ENCODE measurements at regions of chr2 and their contacts with region 1.

Region 1: DNA sequence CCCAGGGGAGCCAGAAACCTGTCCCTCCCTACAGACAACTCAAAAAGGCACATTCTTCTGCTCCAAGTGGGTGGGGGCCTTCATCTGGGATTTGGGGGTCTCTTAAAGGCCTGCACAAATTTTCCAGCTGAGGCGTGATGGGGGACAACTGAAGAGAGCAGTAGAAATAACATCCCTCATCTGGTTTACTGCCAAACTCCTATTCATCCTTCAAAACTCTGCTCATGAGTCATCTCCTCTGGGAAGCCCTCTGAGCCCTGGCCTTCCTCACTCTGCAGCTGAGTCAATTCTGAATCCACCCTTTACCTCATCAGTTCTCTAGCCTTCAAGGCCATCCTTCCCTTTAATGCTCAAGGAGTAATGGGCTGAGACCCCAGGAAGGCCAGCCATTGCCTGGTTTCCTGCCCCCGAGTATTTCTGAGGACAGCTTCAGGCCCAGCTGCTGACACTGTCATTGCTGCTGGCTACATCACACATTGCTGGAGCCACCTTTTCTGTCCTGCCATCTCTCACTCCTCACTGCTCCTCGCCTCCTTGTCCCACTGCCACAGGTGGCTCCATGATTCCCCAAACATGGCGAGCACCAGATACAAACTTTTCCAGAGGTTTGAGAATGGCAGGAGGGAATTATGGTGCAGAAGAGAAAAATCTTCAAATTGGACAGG is 32.2 kb upstream of the GLI2 start:
- DNase-seq: peak; percentile 69
- H3K4me3 ChIP-seq: no peak overlapping the region
- H3K27ac ChIP-seq: no peak overlapping the region
- H3K4me1 ChIP-seq: peaks cover 4% of the 10 kb centered on the region
- H3K27me3 ChIP-seq: no peaks in the 10 kb centered on the region
- CTCF ChIP-seq: no peak

Region 2: GRCh38 chr2:120456867-120457266 is 246.6 kb before region 1 on chr2:
- CTCF ChIA-PET with region 1: no interaction called
- dilution Hi-C with region 1: no loop called
- in situ Hi-C with region 1: no loop called
- intact Hi-C with region 1: no loop called
- DNase-seq: no peak
- H3K4me3 ChIP-seq: no peak overlapping the region
- H3K27ac ChIP-seq: no peak overlapping the region
- H3K4me1 ChIP-seq: no peaks in the 10 kb centered on the region
- H3K27me3 ChIP-seq: no peaks in the 10 kb centered on the region
- CTCF ChIP-seq: peak in 1 of 2 donors; percentile 1

Region 3: DNA sequence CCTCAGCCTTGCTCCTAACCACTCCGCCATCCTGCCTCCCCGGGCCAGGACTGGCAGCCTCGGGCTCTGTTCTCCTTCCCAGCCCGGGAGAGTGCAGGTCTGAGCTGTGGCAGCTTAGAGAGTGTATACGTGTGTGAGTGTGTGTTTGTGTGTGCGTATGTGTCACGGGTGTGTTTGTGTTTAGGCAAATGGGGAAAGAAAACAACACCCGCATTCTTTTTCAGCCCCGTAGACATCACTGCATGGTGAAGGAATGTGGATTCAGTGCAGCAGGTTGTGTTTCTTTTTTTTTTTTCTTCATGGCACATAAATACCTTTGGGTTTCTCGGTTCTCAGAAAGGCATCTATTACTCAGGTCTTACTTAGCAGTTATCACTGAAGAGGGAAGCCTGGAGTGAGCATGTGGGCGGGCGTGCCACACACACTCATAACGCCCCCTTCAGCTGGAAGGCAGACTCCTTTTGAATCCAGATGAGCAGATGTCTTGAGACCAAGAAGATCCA is 76.4 kb after region 1 on chr2:
- CTCF ChIA-PET with region 1: no interaction called
- dilution Hi-C with region 1: loop called (anchors 5 kb)
- in situ Hi-C with region 1: no loop called
- intact Hi-C with region 1: no loop called
- DNase-seq: peak; percentile 14
- H3K4me3 ChIP-seq: no peak overlapping the region
- H3K27ac ChIP-seq: no peak overlapping the region
- H3K4me1 ChIP-seq: no peaks in the 10 kb centered on the region
- H3K27me3 ChIP-seq: no peaks in the 10 kb centered on the region
- CTCF ChIP-seq: no peak

Region 4: DNA sequence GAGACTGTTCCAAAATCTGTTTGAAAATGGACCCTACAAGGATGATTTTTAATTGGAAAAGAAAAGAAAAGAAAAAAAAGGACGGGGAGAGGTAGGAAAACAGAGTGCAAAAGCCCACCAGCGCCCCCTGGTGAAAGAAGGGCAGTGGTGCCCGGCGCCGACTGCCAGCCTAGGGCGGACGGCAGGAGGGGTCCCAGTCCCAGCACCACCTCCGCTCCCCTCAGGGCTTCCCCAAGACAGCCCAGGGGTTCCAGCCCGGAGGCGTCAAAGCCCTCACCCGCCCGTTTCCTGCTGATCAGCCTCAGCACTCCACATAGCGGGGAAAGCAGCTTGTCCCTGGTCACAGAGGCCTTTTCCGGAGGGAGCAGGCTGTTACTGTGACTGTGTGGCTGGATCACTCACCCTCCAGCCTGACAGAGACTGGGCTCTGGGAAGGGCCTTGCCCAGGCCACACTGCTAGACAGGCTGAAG is 367.6 kb after region 1 on chr2:
- CTCF ChIA-PET with region 1: no interaction called
- dilution Hi-C with region 1: loop called (anchors 5 kb)
- in situ Hi-C with region 1: loop called in 1 of 2 experiments (anchors 5 kb)
- intact Hi-C with region 1: no loop called
- DNase-seq: no peak
- H3K4me3 ChIP-seq: no peak overlapping the region
- H3K27ac ChIP-seq: no peak overlapping the region
- H3K4me1 ChIP-seq: peaks cover 5% of the 10 kb centered on the region
- H3K27me3 ChIP-seq: no peaks in the 10 kb centered on the region
- CTCF ChIP-seq: peak; percentile 72 to 88